Endothelial cell of umbilical vein (primary cell): ENCODE measurements at regions of chr6 and their contacts with region 1.

Region 1: DNA sequence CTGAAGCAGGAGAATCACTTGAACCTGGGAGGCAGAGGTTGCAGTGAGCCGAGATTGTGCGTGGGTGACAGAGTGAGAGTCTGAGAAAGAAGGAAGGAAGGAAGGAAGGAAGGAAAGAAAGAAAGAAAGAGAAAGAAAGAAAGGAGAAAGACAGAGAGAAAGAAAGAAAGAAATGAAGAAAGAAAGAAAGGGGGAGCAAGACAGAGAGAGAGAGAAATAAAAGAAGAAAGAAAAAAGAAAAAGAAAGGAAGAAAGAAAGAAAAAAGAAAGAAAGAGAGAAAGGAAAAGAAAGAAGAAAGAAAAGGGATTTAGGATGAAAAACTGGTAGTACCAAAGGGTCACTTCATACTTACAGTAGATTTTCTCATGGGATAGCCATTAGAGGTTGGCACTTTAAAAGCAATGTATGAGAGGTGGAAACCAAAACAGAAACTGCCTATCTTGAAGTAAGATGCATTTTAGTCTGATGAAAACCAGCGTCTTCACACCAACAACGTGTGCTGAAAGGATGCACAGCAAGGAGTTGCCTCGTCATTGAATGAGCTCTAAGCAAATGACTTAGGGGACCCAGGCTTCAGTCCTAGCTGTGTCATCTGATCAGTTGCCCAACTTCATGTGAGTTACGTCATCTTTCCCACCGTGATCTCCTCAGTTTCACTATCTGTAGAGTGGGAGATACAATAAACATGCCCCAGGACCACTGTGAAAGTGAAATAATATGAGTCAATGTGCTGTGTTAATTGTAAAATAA is 133.9 kb upstream of the NEDD9 start:
- DNase-seq: peak; percentile 11
- H3K4me3 ChIP-seq: no peak overlapping the region
- H3K27ac ChIP-seq: peak overlapping the region; percentile 58
- H3K4me1 ChIP-seq: peaks cover 51% of the 10 kb centered on the region
- H3K27me3 ChIP-seq: no peaks in the 10 kb centered on the region
- CTCF ChIP-seq: no peak
- POLR2A ChIP-seq: no peak

Region 2: GRCh38 chr6:11263291-11263775 is 103.0 kb before region 1 on chr6:
- CTCF ChIA-PET with region 1: no interaction called
- POLR2A ChIA-PET with region 1: no interaction called
- dilution Hi-C with region 1: no loop called
- intact Hi-C with region 1: loop called (anchors 1 kb)
- DNase-seq: peak; percentile 86
- H3K4me3 ChIP-seq: no peak overlapping the region
- H3K27ac ChIP-seq: peak overlapping the region; percentile 67
- H3K4me1 ChIP-seq: peaks cover 19% of the 10 kb centered on the region
- H3K27me3 ChIP-seq: no peaks in the 10 kb centered on the region
- CTCF ChIP-seq: no peak
- POLR2A ChIP-seq: no peak

Region 3: DNA sequence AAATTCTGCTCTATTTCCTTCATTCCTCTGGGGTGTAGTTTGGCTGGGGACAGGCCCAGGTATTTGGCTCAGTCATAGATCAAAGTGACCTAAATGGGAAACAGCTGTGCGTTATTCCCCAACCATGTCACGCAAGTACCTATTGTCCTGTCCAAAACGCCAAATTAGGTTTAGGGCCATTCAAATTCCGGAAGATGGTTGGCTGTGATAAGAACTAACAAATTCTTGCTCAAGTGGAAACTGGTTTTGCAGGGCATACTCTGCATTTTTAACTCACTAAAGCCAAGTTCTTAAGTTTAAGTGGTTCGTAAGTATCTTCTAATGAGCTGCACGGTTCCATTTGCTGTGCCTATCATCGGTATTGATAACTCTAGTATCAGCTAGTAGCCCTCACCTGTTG is 23.7 kb after region 1 on chr6:
- CTCF ChIA-PET with region 1: interaction called, 3 read pairs
- POLR2A ChIA-PET with region 1: no interaction called
- dilution Hi-C with region 1: no loop called
- intact Hi-C with region 1: loop called (anchors 1 kb)
- DNase-seq: peak; percentile 83
- H3K4me3 ChIP-seq: no peak overlapping the region
- H3K27ac ChIP-seq: peak overlapping the region; percentile 68
- H3K4me1 ChIP-seq: peaks cover 28% of the 10 kb centered on the region
- H3K27me3 ChIP-seq: peaks cover 2 to 4% of the 10 kb centered on the region in 2 experiments
- CTCF ChIP-seq: no peak
- POLR2A ChIP-seq: no peak

Region 4: GRCh38 chr6:11428895-11429294 is 62.5 kb after region 1 on chr6:
- CTCF ChIA-PET with region 1: no interaction called
- POLR2A ChIA-PET with region 1: no interaction called
- dilution Hi-C with region 1: no loop called
- intact Hi-C with region 1: loop called (anchors 5 kb)
- DNase-seq: no peak
- H3K4me3 ChIP-seq: no peak overlapping the region
- H3K27ac ChIP-seq: peak overlapping the region; percentile 79
- H3K4me1 ChIP-seq: peaks cover 70% of the 10 kb centered on the region
- H3K27me3 ChIP-seq: no peaks in the 10 kb centered on the region
- CTCF ChIP-seq: no peak
- POLR2A ChIP-seq: no peak